Body of pancreas (tissue), 4 donors: ENCODE measurements at regions of chr2 and their contacts with region 1.

Region 1: GRCh38 chr2:156394033-156394739 is 42.0 kb upstream of the GPD2 start:
- DNase-seq: no peak
- ATAC-seq: no peak
- H3K4me3 ChIP-seq: no peak overlapping the region
- H3K27ac ChIP-seq: no peak overlapping the region
- H3K4me1 ChIP-seq: peaks cover 8% of the 10 kb centered on the region
- H3K27me3 ChIP-seq: no peaks in the 10 kb centered on the region
- CTCF ChIP-seq: no peak
- POLR2A ChIP-seq: no peak

Region 2: GRCh38 chr2:156349605-156350004 is 44.6 kb before region 1 on chr2:
- intact Hi-C with region 1: loop called (anchors 5 kb)
- DNase-seq: no peak
- ATAC-seq: no peak
- H3K4me3 ChIP-seq: no peak overlapping the region
- H3K27ac ChIP-seq: no peak overlapping the region
- H3K4me1 ChIP-seq: no peaks in the 10 kb centered on the region
- H3K27me3 ChIP-seq: no peaks in the 10 kb centered on the region
- CTCF ChIP-seq: no peak
- POLR2A ChIP-seq: no peak